Posterior cingulate gyrus (tissue), 11 donors: ENCODE measurements at regions of chr22 and their contacts with region 1.

Region 1: GRCh38 chr22:30423982-30424963 is 1.3 kb upstream of the MTFP1 start:
- DNase-seq: peak; percentile 97 to 100 (median 98)

Region 2: GRCh38 chr22:30396871-30397655 is 27.2 kb before region 1 on chr22 and contains the start of gene SEC14L2:
- intact Hi-C with region 1: loop called (anchors 1 kb)
- DNase-seq: peak; percentile 79 to 98 (median 86)

Region 3: DNA sequence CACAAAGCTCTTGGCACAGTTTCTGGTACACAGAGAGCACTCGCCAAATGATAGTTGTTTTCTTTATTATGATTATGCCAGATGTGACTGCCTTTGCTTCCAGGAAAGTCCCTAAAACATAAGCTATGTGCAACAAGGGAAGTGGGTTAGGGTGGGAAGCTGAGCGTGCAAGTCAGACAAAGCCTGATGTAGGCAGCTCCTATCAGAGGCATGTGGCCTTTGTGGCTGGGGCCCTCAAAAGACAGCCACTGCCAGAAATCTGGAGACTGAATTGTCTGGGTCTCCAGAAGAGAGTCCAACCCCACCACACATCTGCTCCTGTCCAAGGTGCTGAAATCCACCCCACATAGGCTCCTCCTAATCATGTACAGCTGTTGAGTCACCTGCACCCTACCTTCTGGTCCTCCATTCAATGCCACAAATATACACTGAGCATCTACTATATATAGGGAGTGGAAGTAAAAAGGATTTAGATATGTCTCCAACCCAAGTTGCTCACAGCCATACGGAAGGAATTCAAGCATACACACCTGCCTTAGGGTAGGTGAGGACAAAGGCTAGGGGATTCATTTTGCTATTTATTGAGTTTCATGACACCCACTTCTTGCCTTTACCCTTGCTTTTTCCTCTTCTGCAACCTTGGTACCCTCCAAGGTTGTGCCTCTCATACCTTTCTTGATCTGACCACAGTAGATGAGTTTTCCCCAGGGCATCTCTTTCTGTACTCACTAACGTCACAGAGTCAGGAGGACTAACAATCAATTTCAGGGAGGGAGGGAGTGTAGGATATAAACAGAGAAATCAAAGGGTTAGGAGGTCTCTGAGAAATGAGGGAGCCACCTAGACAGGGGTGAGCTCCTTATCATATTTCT is 35.1 kb after region 1 on chr22:
- intact Hi-C with region 1: no loop called
- DNase-seq: no peak